A673 (cell line): ENCODE measurements at regions of chr5 and their contacts with region 1.

Region 1: DNA sequence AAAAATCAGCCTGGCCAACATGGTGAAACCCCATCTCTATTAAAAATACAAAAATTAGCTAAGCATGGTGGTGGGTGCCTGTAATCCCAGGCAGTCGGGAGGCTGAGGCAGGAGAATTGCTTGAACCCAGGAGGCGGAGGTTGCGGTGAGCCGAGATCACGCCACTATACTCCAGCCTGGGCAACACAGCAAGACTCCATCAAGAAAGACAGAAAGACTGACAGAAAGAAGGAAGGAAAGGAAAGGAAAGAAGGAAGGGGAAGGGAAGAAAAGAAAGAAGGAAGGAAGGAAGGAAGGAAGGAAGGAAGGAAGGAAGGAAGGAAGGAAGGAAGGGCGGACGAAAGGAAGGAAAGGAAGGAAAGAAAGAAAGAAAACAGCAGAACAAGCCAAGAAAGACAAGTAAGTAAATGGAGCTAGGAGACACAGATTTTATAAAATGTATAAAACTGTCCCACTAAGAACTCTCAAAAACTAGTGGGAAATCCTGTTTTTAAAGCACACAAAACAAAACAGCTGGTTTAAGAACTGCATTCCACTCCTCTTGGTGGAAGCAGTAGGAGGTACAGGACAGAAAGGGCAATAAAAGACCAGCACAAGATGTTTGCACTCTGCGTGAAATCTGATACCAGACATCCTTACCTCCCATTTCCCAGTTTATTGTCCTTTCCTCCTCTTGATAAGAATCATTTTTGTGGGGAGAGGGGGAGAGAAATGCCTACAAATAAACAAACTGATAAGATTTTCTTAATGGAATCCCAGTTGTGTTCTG is 46.7 kb downstream of the MYO10 start:
- DNase-seq: peak; percentile 90
- H3K4me3 ChIP-seq: peak overlapping the region; percentile 18
- H3K27ac ChIP-seq: peak overlapping the region; percentile 88
- H3K4me1 ChIP-seq: peaks cover 94% of the 10 kb centered on the region
- H3K27me3 ChIP-seq: no peaks in the 10 kb centered on the region
- CTCF ChIP-seq: no peak

Region 2: GRCh38 chr5:17024686-17025180 is 135.3 kb after region 1 on chr5:
- CTCF ChIA-PET with region 1: no interaction called
- POLR2A ChIA-PET with region 1: interaction called, 14 read pairs
- intact Hi-C with region 1: no loop called
- DNase-seq: peak; percentile 63
- H3K4me3 ChIP-seq: no peak overlapping the region
- H3K27ac ChIP-seq: peak overlapping the region; percentile 60
- H3K4me1 ChIP-seq: peaks cover 12% of the 10 kb centered on the region
- H3K27me3 ChIP-seq: no peaks in the 10 kb centered on the region
- CTCF ChIP-seq: no peak